K562 (cell line): ENCODE measurements at regions of chr10 and their contacts with region 1.

Region 1: DNA sequence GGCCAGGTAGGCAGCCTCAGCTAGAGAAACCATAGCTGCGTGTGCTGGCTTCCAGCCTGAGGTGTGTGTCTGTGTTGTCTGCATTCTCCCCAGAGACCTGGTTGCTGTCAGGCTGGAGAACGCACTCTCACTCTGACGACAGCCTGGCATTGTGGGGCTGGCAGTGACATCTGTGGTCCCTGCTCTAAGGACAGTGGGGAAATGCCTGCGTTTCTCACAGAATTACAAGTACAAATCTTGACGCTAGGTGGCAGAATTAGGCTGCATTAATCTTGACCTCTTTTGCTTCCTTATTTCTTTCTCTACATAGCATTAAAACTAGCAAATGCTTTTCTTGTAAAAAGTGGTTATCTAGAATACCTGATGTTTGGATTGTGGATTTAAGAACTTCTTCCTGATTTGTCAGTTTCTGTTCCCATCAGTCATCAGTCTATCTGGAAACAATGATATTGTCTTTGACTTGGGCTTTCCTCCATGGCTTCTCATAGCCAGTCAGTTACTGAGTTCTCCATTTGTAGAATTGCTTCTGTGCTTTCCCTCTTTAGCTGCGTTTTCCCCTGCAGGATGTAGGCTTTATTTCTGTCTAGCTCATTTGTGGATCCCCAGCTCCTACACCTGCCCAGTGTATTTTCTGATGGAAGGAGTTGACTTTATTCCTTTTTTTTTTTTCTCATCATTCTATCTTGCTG is 86.0 kb downstream of the FANK1 start:
- DNase-seq: peak in 3 of 4 experiments; percentile 8 to 53 (median 17)
- ATAC-seq: peak; percentile 84
- H3K4me3 ChIP-seq: no peak overlapping the region
- H3K27ac ChIP-seq: no peak overlapping the region
- H3K4me1 ChIP-seq: no peaks in the 10 kb centered on the region; a peak in 1 of 5 replicates
- H3K27me3 ChIP-seq: peaks cover 0 to 13% of the 10 kb centered on the region in 2 experiments; a peak in 2 of 5 replicates
- CTCF ChIP-seq: peak; percentile 36 to 62 (median 58); a peak in 5 of 6 replicates
- EP300 ChIP-seq: no peak
- POLR2A ChIP-seq: no peak
- RAD21 ChIP-seq: peak; percentile 57 to 80

Region 2: GRCh38 chr10:125868372-125868975 is 113.9 kb before region 1 on chr10:
- CTCF ChIA-PET with region 1: interaction called, 4 read pairs
- POLR2A ChIA-PET with region 1: interaction called, 3 read pairs
- in situ Hi-C with region 1: loop called (anchors 10 kb)
- intact Hi-C with region 1: loop called (anchors 5 kb)
- DNase-seq: peak in 3 of 4 experiments; percentile 12 to 51 (median 17)
- ATAC-seq: peak; percentile 75
- H3K4me3 ChIP-seq: no peak overlapping the region
- H3K27ac ChIP-seq: no peak overlapping the region
- H3K4me1 ChIP-seq: no peaks in the 10 kb centered on the region; a peak in 1 of 5 replicates
- H3K27me3 ChIP-seq: no peaks in the 10 kb centered on the region
- CTCF ChIP-seq: peak; percentile 56 to 75 (median 70); a peak in 5 of 6 replicates
- EP300 ChIP-seq: no peak
- POLR2A ChIP-seq: no peak
- RAD21 ChIP-seq: peak; percentile 63 to 70

Region 3: GRCh38 chr10:126160971-126161659 is 178.7 kb after region 1 on chr10:
- CTCF ChIA-PET with region 1: no interaction called
- POLR2A ChIA-PET with region 1: no interaction called
- in situ Hi-C with region 1: no loop called
- intact Hi-C with region 1: loop called (anchors 10 kb)
- DNase-seq: peak in 1 of 4 experiments; percentile 1
- ATAC-seq: no peak
- H3K4me3 ChIP-seq: no peak overlapping the region
- H3K27ac ChIP-seq: no peak overlapping the region
- H3K4me1 ChIP-seq: no peaks in the 10 kb centered on the region
- H3K27me3 ChIP-seq: no peaks in the 10 kb centered on the region; a peak in 1 of 5 replicates
- CTCF ChIP-seq: peak; percentile 26 to 52 (median 50)
- EP300 ChIP-seq: no peak
- POLR2A ChIP-seq: no peak
- RAD21 ChIP-seq: peak; percentile 58 to 60

Region 4: GRCh38 chr10:126387023-126387921 is 404.9 kb after region 1 on chr10:
- CTCF ChIA-PET with region 1: no interaction called
- POLR2A ChIA-PET with region 1: no interaction called
- in situ Hi-C with region 1: no loop called
- intact Hi-C with region 1: loop called (anchors 5 kb)
- DNase-seq: peak; percentile 16 to 39 (median 24)
- ATAC-seq: peak; percentile 77
- H3K4me3 ChIP-seq: no peak overlapping the region
- H3K27ac ChIP-seq: no peak overlapping the region
- H3K4me1 ChIP-seq: no peaks in the 10 kb centered on the region
- H3K27me3 ChIP-seq: no peaks in the 10 kb centered on the region
- CTCF ChIP-seq: peak; percentile 43 to 59 (median 54)
- EP300 ChIP-seq: no peak
- POLR2A ChIP-seq: no peak
- RAD21 ChIP-seq: peak; percentile 27 to 46

Region 5: DNA sequence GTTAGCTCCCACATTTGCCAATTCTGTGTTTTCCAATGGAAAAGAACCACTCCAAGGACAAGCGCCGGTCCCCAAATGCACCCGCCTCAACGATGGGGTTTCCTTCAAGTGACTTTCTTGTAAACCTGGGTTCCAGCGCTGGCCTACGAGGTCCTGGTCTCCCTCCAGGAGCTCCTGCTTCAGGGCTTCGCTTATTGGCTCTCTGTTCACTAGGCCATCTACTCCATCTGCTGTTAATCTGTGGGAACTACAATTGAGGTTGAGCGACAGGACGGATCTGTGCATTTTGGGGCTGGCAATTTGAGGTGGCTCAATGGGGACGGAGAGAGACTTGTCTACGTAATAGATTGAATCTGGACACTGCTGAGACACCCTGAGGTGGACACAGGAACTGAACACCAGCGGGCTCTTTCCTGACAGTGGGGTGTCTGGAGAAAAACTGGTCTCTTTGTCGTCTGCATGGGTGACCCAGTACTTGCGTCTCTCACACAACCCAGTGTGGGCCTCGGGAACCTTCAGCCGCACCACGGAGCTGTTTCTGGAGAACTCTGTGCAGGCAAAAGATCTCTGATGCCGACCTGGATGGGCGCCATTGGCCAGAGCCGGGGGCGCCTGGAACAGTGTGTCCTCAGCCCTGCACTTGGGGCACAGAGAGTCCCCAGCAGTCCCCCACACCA is 521.8 kb after region 1 on chr10:
- CTCF ChIA-PET with region 1: interaction called, 3 read pairs
- POLR2A ChIA-PET with region 1: no interaction called
- in situ Hi-C with region 1: loop called (anchors 10 kb)
- intact Hi-C with region 1: loop called (anchors 5 kb)
- DNase-seq: peak; percentile 5 to 45 (median 20)
- ATAC-seq: peak; percentile 90
- H3K4me3 ChIP-seq: no peak overlapping the region
- H3K27ac ChIP-seq: no peak overlapping the region
- H3K4me1 ChIP-seq: no peaks in the 10 kb centered on the region; a peak in 1 of 5 replicates
- H3K27me3 ChIP-seq: no peaks in the 10 kb centered on the region; a peak in 1 of 5 replicates
- CTCF ChIP-seq: peak; percentile 52 to 60 (median 52)
- EP300 ChIP-seq: no peak
- POLR2A ChIP-seq: no peak
- RAD21 ChIP-seq: peak; percentile 45 to 64

Region 6: GRCh38 chr10:126749015-126749655 is 766.7 kb after region 1 on chr10:
- CTCF ChIA-PET with region 1: no interaction called
- POLR2A ChIA-PET with region 1: no interaction called
- in situ Hi-C with region 1: no loop called
- intact Hi-C with region 1: loop called (anchors 10 kb)
- DNase-seq: peak; percentile 17 to 53 (median 24)
- ATAC-seq: peak; percentile 81
- H3K4me3 ChIP-seq: no peak overlapping the region
- H3K27ac ChIP-seq: no peak overlapping the region
- H3K4me1 ChIP-seq: no peaks in the 10 kb centered on the region
- H3K27me3 ChIP-seq: no peaks in the 10 kb centered on the region
- CTCF ChIP-seq: peak; percentile 26 to 53 (median 50); a peak in 4 of 6 replicates
- EP300 ChIP-seq: no peak
- POLR2A ChIP-seq: no peak
- RAD21 ChIP-seq: peak; percentile 8 to 53; a peak in 2 of 4 replicates

Region 7: GRCh38 chr10:127853868-127854768 is 1871.7 kb after region 1 on chr10:
- CTCF ChIA-PET with region 1: no interaction called
- POLR2A ChIA-PET with region 1: no interaction called
- in situ Hi-C with region 1: no loop called
- intact Hi-C with region 1: loop called (anchors 2 kb)
- DNase-seq: peak; percentile 45 to 55 (median 51)
- ATAC-seq: peak; percentile 95
- H3K4me3 ChIP-seq: no peak overlapping the region
- H3K27ac ChIP-seq: no peak overlapping the region
- H3K4me1 ChIP-seq: no peaks in the 10 kb centered on the region
- H3K27me3 ChIP-seq: no peaks in the 10 kb centered on the region
- CTCF ChIP-seq: peak; percentile 55 to 69 (median 59)
- EP300 ChIP-seq: no peak
- POLR2A ChIP-seq: no peak
- RAD21 ChIP-seq: peak; percentile 52 to 78